ENCODE measurements at regions of chr17 and their contacts with region 1.

Region 1: GRCh38 chr17:41648411-41649195 is 24.2 kb upstream of the KRT17 start:
- DNase-seq: peak; percentile 90
- ATAC-seq: peak; percentile 92
- H3K4me3 ChIP-seq: peak overlapping the region; percentile 23 to 74 (median 55)
- H3K4me3 Mint-ChIP-seq: peak overlapping the region; percentile 60
- H3K27ac ChIP-seq: peak overlapping the region in 1 of 2 donors; percentile 17
- H3K27ac Mint-ChIP-seq: peak overlapping the region; percentile 51
- H3K4me1 ChIP-seq: peaks cover 9 to 18% of the 10 kb centered on the region in 2 donors
- H3K4me1 Mint-ChIP-seq: peaks cover 12% of the 10 kb centered on the region
- H3K27me3 ChIP-seq: peaks cover 0 to 5% (median 1%) of the 10 kb centered on the region in 4 experiments
- H3K27me3 Mint-ChIP-seq: no peaks in the 10 kb centered on the region
- CTCF ChIP-seq: peak; percentile 74

Region 2: DNA sequence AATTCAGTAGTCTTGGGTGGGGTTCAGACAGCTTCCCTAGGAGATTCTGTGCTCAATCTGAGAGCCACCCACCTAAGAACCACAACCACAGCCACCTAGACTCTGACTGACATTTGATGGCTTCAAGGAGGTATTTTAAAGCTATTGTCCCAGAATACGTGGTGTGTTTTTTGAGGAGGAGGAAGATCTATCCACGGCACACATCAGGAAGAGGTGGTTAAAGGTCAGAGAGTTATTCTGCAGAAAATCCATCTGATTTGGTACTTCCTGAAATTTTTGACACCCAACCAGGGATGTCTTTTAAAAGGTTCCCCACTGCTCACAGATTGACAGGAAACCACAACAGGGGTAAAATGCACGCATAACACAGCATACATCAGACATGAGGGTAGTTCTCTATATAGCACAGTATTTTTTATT is 1026.1 kb before region 1 on chr17:
- CTCF ChIA-PET with region 1: interaction called, 10 read pairs
- POLR2A ChIA-PET with region 1: no interaction called
- intact Hi-C with region 1: loop called (anchors 5 kb)
- DNase-seq: peak; percentile 62
- ATAC-seq: peak; percentile 23
- H3K4me3 ChIP-seq: no peak overlapping the region
- H3K4me3 Mint-ChIP-seq: peak overlapping the region; percentile 69
- H3K27ac ChIP-seq: no peak overlapping the region
- H3K27ac Mint-ChIP-seq: peak overlapping the region; percentile 77
- H3K4me1 ChIP-seq: peaks cover 57 to 58% of the 10 kb centered on the region in 2 donors
- H3K4me1 Mint-ChIP-seq: peaks cover 59% of the 10 kb centered on the region
- H3K27me3 ChIP-seq: no peaks in the 10 kb centered on the region
- H3K27me3 Mint-ChIP-seq: no peaks in the 10 kb centered on the region
- CTCF ChIP-seq: no peak

Region 3: DNA sequence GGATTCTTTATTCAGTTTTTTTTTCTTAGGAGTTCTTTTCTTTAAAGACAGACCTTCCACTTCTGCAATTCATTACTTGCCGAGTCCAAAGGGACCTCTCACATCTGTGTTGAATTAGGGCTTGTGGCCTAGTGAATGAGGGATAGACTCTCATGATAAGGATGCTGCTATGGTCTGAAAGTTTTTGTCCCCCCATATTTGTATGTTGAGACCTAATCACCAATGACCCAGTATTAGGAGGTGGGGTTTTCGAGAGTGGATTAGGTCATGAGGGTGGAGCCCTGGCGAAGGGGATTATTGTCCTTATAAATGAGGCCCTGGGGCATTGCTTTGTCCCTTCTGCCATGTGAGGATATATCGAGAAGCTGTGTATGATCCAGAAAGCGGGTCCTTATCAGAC is 791.1 kb before region 1 on chr17:
- CTCF ChIA-PET with region 1: interaction called, 10 read pairs
- POLR2A ChIA-PET with region 1: no interaction called
- intact Hi-C with region 1: loop called (anchors 1 kb)
- DNase-seq: no peak
- ATAC-seq: no peak
- H3K4me3 ChIP-seq: no peak overlapping the region
- H3K4me3 Mint-ChIP-seq: no peak overlapping the region
- H3K27ac ChIP-seq: no peak overlapping the region
- H3K27ac Mint-ChIP-seq: no peak overlapping the region
- H3K4me1 ChIP-seq: no peaks in the 10 kb centered on the region
- H3K4me1 Mint-ChIP-seq: no peaks in the 10 kb centered on the region
- H3K27me3 ChIP-seq: peaks cover 0 to 8% (median 0%) of the 10 kb centered on the region in 4 experiments
- H3K27me3 Mint-ChIP-seq: peaks cover 48% of the 10 kb centered on the region
- CTCF ChIP-seq: no peak

Region 4: GRCh38 chr17:41332239-41332638 is 316.4 kb before region 1 on chr17:
- CTCF ChIA-PET with region 1: interaction called, 4 read pairs
- POLR2A ChIA-PET with region 1: interaction called, 13 read pairs
- intact Hi-C with region 1: no loop called
- DNase-seq: no peak
- ATAC-seq: no peak
- H3K4me3 ChIP-seq: no peak overlapping the region
- H3K4me3 Mint-ChIP-seq: no peak overlapping the region
- H3K27ac ChIP-seq: no peak overlapping the region
- H3K27ac Mint-ChIP-seq: no peak overlapping the region
- H3K4me1 ChIP-seq: peaks cover 0 to 3% of the 10 kb centered on the region in 2 donors
- H3K4me1 Mint-ChIP-seq: peaks cover 6% of the 10 kb centered on the region
- H3K27me3 ChIP-seq: peaks cover 0 to 15% (median 1%) of the 10 kb centered on the region in 4 experiments
- H3K27me3 Mint-ChIP-seq: peaks cover 14% of the 10 kb centered on the region
- CTCF ChIP-seq: no peak

Region 5: GRCh38 chr17:41629316-41629715 is 19.3 kb before region 1 on chr17:
- CTCF ChIA-PET with region 1: no interaction called
- POLR2A ChIA-PET with region 1: no interaction called
- intact Hi-C with region 1: no loop called
- DNase-seq: no peak
- ATAC-seq: no peak
- H3K4me3 ChIP-seq: no peak overlapping the region
- H3K4me3 Mint-ChIP-seq: no peak overlapping the region
- H3K27ac ChIP-seq: no peak overlapping the region
- H3K27ac Mint-ChIP-seq: no peak overlapping the region
- H3K4me1 ChIP-seq: no peaks in the 10 kb centered on the region
- H3K4me1 Mint-ChIP-seq: no peaks in the 10 kb centered on the region
- H3K27me3 ChIP-seq: no peaks in the 10 kb centered on the region
- H3K27me3 Mint-ChIP-seq: peaks cover 15% of the 10 kb centered on the region
- CTCF ChIP-seq: no peak

Region 6: DNA sequence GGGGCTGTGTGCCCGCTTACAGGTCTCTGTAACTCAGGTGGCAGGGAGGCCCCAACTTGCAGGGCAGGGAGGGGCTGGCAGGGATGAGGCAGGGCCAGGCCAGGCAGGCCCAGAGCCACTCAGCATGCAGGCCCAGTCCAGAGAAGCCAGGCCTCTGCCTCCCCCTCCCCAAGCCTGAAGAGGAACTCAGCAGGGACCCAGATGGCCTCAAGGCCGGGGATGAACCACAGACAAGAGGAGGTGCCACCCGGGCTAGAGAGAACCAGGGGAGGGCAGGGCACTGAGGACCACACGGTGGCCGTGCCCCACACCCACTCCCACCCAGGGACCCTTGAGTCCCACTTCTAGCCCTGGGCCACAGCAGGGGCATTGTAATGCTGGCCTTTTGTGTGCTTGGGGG is 10.2 kb after region 1 on chr17:
- CTCF ChIA-PET with region 1: interaction called, 438 read pairs
- POLR2A ChIA-PET with region 1: interaction called, 12 read pairs
- intact Hi-C with region 1: no loop called
- DNase-seq: no peak
- ATAC-seq: no peak
- H3K4me3 ChIP-seq: no peak overlapping the region
- H3K4me3 Mint-ChIP-seq: no peak overlapping the region
- H3K27ac ChIP-seq: no peak overlapping the region
- H3K27ac Mint-ChIP-seq: no peak overlapping the region
- H3K4me1 ChIP-seq: peaks cover 0 to 8% of the 10 kb centered on the region in 2 donors
- H3K4me1 Mint-ChIP-seq: peaks cover 7% of the 10 kb centered on the region
- H3K27me3 ChIP-seq: no peaks in the 10 kb centered on the region
- H3K27me3 Mint-ChIP-seq: no peaks in the 10 kb centered on the region
- CTCF ChIP-seq: no peak

Region 7: DNA sequence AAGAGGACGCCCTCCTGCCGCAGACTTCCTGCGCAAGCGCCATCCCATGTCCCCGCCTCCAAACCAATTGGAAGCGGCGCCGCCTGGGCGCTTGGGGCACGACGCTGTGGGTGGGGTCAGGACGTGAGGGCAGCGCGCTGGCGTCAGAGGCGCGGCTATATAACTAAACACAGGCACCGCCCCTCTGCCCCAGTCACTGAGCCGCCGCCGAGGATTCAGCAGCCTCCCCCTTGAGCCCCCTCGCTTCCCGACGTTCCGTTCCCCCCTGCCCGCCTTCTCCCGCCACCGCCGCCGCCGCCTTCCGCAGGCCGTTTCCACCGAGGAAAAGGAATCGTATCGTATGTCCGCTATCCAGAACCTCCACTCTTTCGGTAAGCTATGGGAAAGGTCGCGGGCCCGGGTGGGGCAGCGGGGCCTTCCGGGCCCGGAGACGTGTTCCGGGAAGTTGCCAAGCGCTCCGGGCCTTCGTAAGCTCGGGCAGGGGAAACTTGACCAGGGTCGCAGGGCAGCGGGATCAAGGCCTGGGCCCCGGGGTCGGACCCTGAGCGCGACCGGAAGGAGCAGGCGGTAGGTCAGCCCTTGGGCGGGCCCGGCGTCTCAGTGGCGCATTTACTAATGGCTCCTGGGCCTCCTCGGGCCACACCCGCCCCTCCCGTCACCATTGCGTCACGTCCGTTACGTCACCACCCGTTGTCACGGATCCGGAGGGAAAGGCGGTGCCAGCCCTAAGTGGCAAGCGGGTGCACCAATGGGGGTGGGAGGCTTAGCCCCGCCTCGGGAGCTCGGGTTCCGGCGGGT is 40.3 kb after region 1 on chr17 and contains the start of gene EIF1:
- CTCF ChIA-PET with region 1: interaction called, 14 read pairs
- POLR2A ChIA-PET with region 1: interaction called, 3 read pairs
- intact Hi-C with region 1: no loop called
- DNase-seq: peak; percentile 100
- ATAC-seq: peak; percentile 75
- H3K4me3 ChIP-seq: peak within 1 kb of the TSS; percentile 81 to 99 (median 87)
- H3K4me3 Mint-ChIP-seq: peak within 1 kb of the TSS; percentile 96
- H3K27ac ChIP-seq: peak within 1 kb of the TSS; percentile 99
- H3K27ac Mint-ChIP-seq: peak within 1 kb of the TSS; percentile 100
- H3K4me1 ChIP-seq: peaks cover 22 to 27% of the 10 kb centered on the region in 2 donors
- H3K4me1 Mint-ChIP-seq: peaks cover 38% of the 10 kb centered on the region
- H3K27me3 ChIP-seq: no peaks in the 10 kb centered on the region
- H3K27me3 Mint-ChIP-seq: no peaks in the 10 kb centered on the region
- CTCF ChIP-seq: no peak
- total RNA-seq, gene EIF1: 753 and 773 TPM in 2 replicates

Measured in B cell (primary cell).